ENCODE measurements at regions of chr15 and their contacts with region 1.

Region 1: GRCh38 chr15:55168329-55168974 is 28.3 kb downstream of the RSL24D1 start:
- DNase-seq: peak; percentile 8
- ATAC-seq: peak; percentile 99
- H3K4me3 ChIP-seq: no peak overlapping the region
- H3K27ac ChIP-seq: no peak overlapping the region
- H3K4me1 ChIP-seq: no peaks in the 10 kb centered on the region
- H3K27me3 ChIP-seq: no peaks in the 10 kb centered on the region
- CTCF ChIP-seq: peak; percentile 79 to 94 (median 86)
- EP300 ChIP-seq: no peak
- POLR2A ChIP-seq: no peak
- RAD21 ChIP-seq: peak; percentile 75

Region 2: DNA sequence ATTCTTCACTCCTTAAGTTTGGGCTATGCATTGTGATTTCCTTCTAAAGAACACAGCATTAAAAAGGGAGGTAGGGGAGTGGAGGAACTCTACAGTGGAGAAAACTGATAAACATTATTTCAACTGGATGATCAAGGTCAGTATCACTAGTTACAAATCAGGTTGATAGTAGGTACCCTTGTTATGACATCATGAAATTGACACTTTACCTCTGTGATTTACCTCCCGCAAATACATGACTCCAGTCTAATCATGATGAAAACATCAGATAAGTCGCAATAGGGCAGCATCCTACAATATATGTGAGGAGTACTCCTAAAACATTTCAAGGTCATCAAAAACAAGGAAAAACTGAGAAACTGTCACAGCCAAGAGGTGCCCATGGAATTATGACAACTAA is 1281.8 kb before region 1 on chr15:
- CTCF ChIA-PET with region 1: interaction called, 50 read pairs
- POLR2A ChIA-PET with region 1: no interaction called
- RAD21 ChIA-PET with region 1: interaction called, 21 read pairs
- SMC1A ChIA-PET with region 1: interaction called, 16 read pairs
- in situ Hi-C with region 1: no loop called
- intact Hi-C with region 1: loop called (anchors 5 kb)
- DNase-seq: no peak
- ATAC-seq: no peak
- H3K4me3 ChIP-seq: no peak overlapping the region
- H3K27ac ChIP-seq: no peak overlapping the region
- H3K4me1 ChIP-seq: no peaks in the 10 kb centered on the region
- H3K27me3 ChIP-seq: no peaks in the 10 kb centered on the region
- CTCF ChIP-seq: no peak
- EP300 ChIP-seq: no peak
- POLR2A ChIP-seq: no peak
- RAD21 ChIP-seq: no peak

Region 3: GRCh38 chr15:53962332-53963241 is 1205.9 kb before region 1 on chr15:
- CTCF ChIA-PET with region 1: interaction called, 65 read pairs
- POLR2A ChIA-PET with region 1: no interaction called
- RAD21 ChIA-PET with region 1: interaction called, 32 read pairs
- SMC1A ChIA-PET with region 1: interaction called, 66 read pairs
- in situ Hi-C with region 1: loop called (anchors 10 kb)
- intact Hi-C with region 1: loop called (anchors 2 kb)
- DNase-seq: no peak
- ATAC-seq: peak; percentile 94
- H3K4me3 ChIP-seq: no peak overlapping the region
- H3K27ac ChIP-seq: no peak overlapping the region
- H3K4me1 ChIP-seq: no peaks in the 10 kb centered on the region
- H3K27me3 ChIP-seq: no peaks in the 10 kb centered on the region
- CTCF ChIP-seq: peak; percentile 42 to 70 (median 61)
- EP300 ChIP-seq: no peak
- POLR2A ChIP-seq: no peak
- RAD21 ChIP-seq: peak; percentile 68

Region 4: DNA sequence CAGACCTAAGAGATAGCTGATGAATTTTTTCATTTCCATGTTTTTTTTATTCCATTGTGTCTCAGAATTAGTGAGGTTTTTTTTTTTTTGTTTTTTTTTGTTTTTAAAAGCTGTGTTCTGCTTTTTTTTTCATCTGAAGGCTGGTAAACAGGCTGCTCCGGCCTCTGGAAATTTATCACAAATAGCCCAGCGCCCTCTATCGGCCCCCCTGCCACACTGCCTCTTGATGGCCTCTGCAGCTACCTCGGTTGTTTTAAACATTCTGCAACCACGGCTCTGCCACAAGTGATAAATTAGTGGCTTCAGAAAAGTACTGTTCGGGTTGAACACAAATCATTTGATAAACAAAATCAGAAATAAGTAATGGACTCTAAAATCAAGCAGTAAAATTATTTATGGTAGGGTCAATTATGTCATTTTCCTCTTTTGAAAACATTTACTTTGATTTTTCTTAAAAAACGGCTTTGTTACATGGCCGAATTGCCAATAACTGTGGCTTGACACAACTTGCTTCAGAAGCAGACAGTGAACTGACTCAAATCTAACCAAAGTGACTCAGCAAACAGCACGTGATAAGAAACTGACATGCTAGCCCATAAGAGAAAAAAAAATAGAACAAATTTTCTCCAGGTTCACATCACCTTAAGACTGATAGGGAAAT is 59.5 kb before region 1 on chr15:
- CTCF ChIA-PET with region 1: interaction called, 5 read pairs
- POLR2A ChIA-PET with region 1: interaction called, 3 read pairs
- RAD21 ChIA-PET with region 1: no interaction called
- SMC1A ChIA-PET with region 1: interaction called, 13 read pairs
- in situ Hi-C with region 1: no loop called
- intact Hi-C with region 1: no loop called
- DNase-seq: peak; percentile 9
- ATAC-seq: peak; percentile 91
- H3K4me3 ChIP-seq: no peak overlapping the region
- H3K27ac ChIP-seq: no peak overlapping the region
- H3K4me1 ChIP-seq: no peaks in the 10 kb centered on the region
- H3K27me3 ChIP-seq: no peaks in the 10 kb centered on the region
- CTCF ChIP-seq: peak; percentile 74 to 83 (median 77)
- EP300 ChIP-seq: 0 out of 4 replicates have a peak, but pooled peaks of 1 of the 2 experiments have one; percentile 26
- POLR2A ChIP-seq: no peak
- RAD21 ChIP-seq: peak; percentile 70

Region 5: GRCh38 chr15:55179141-55179540 is 10.7 kb after region 1 on chr15:
- CTCF ChIA-PET with region 1: interaction called, 17 read pairs
- POLR2A ChIA-PET with region 1: no interaction called
- RAD21 ChIA-PET with region 1: interaction called, 4 read pairs
- SMC1A ChIA-PET with region 1: interaction called, 13 read pairs
- in situ Hi-C with region 1: no loop called
- intact Hi-C with region 1: no loop called
- DNase-seq: no peak
- ATAC-seq: no peak
- H3K4me3 ChIP-seq: no peak overlapping the region
- H3K27ac ChIP-seq: no peak overlapping the region
- H3K4me1 ChIP-seq: no peaks in the 10 kb centered on the region
- H3K27me3 ChIP-seq: no peaks in the 10 kb centered on the region
- CTCF ChIP-seq: no peak
- EP300 ChIP-seq: no peak
- POLR2A ChIP-seq: no peak
- RAD21 ChIP-seq: no peak

Region 6: DNA sequence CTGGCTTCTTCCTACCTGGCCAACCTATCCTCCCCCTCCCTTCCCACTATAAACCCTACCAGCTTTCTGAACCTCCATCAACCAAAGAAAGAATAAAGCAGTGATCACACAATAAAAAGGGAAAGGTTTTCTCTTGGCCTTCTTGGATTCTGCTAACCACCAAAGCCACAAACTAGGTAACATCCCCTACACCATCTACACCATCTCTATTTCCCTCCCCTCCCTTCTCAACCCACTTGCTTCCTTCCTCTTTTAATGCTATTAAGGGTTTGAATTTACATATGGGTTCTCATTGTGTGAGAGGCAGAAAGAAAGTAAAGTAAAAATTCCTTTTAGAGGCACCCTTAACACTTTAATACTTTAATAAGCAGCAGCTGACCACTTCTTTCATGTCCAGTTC is 54.1 kb after region 1 on chr15:
- CTCF ChIA-PET with region 1: no interaction called
- POLR2A ChIA-PET with region 1: no interaction called
- RAD21 ChIA-PET with region 1: no interaction called
- SMC1A ChIA-PET with region 1: no interaction called
- in situ Hi-C with region 1: no loop called
- intact Hi-C with region 1: no loop called
- DNase-seq: peak; percentile 45
- ATAC-seq: peak; percentile 71
- H3K4me3 ChIP-seq: no peak overlapping the region
- H3K27ac ChIP-seq: peak overlapping the region; percentile 60; the same call in 1 of the 2 replicates
- H3K4me1 ChIP-seq: peaks cover 33% of the 10 kb centered on the region
- H3K27me3 ChIP-seq: no peaks in the 10 kb centered on the region
- CTCF ChIP-seq: no peak
- EP300 ChIP-seq: no peak
- POLR2A ChIP-seq: no peak
- RAD21 ChIP-seq: no peak

Region 7: GRCh38 chr15:55234104-55234799 is 65.8 kb after region 1 on chr15:
- CTCF ChIA-PET with region 1: no interaction called
- POLR2A ChIA-PET with region 1: no interaction called
- RAD21 ChIA-PET with region 1: no interaction called
- SMC1A ChIA-PET with region 1: no interaction called
- in situ Hi-C with region 1: no loop called
- intact Hi-C with region 1: no loop called
- DNase-seq: no peak
- ATAC-seq: no peak
- H3K4me3 ChIP-seq: no peak overlapping the region
- H3K27ac ChIP-seq: no peak overlapping the region
- H3K4me1 ChIP-seq: no peaks in the 10 kb centered on the region
- H3K27me3 ChIP-seq: no peaks in the 10 kb centered on the region
- CTCF ChIP-seq: no peak
- EP300 ChIP-seq: no peak
- POLR2A ChIP-seq: no peak
- RAD21 ChIP-seq: no peak

Measured in GM12878 (cell line).